ENCODE measurements at regions of chr16 and their contacts with region 1.

Region 1: GRCh38 chr16:58684354-58685083 is at the start of gene SLC38A7:
- DNase-seq: peak; percentile 93
- ATAC-seq: peak; percentile 92
- total RNA-seq, gene SLC38A7: 36.1 TPM

Region 2: GRCh38 chr16:58605562-58605961 is 79.0 kb before region 1 on chr16:
- intact Hi-C with region 1: no loop called
- DNase-seq: no peak
- ATAC-seq: no peak

Region 3: DNA sequence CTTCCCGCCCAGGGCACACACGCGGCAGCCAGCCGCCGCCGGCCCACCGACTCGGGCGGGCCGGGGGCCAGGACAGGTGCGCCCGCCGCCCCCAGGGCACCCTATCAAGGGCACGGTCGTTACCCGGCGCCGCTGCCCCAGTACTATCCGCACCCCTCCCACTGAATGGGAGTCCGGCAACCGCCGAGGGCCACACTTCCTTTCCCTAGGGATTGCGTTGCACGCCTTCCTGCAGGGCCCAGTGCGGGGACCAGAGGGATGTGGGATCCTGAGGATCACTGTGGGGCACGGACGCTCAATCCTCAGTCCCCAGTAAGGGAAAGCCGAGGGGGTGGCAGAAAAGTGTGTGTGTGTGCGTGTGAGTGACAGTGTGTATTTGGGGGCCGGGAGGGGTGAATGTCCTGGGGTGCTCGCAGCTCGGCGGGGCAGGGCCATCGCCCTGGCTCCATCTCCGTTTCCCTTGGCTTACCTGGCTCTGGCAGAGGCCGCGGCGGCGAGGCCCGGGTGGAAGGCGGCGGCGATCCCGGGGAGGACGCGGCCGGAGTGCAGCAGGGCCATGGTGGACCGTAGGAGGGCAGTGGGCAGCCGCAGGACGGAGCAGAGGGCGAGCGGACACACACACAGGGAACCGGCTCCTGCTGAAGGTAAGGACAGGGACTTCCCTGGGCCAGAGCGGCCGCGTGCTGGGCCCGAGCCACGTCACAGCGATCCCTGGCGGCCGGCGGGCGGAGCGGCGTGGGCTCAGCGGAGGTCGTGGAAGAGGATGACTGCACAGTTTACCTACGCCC is 49.3 kb after region 1 on chr16 and contains the start of gene GOT2:
- intact Hi-C with region 1: loop called (anchors 10 kb)
- DNase-seq: peak; percentile 90
- ATAC-seq: peak; percentile 97
- total RNA-seq, gene GOT2: 555 TPM

Measured in left ventricle myocardium superior (tissue), 1 donor.